Activated B cell treated with CpG ODN at 0.5 μM for 24 hours (primary cell): ENCODE measurements at regions of chr14 and their contacts with region 1.

Region 1: GRCh38 chr14:23320774-23321571 is at the start of gene PABPN1:
- DNase-seq: peak; percentile 89
- ATAC-seq: peak; percentile 87
- H3K4me3 Mint-ChIP-seq: peak within 1 kb of the TSS; percentile 90
- H3K27ac Mint-ChIP-seq: peak within 1 kb of the TSS; percentile 98
- H3K4me1 Mint-ChIP-seq: peaks cover 26% of the 10 kb centered on the region
- H3K27me3 Mint-ChIP-seq: no peaks in the 10 kb centered on the region
- CTCF ChIP-seq: no peak
- total RNA-seq, gene PABPN1: 259 and 264 TPM in 2 replicates

Region 2: GRCh38 chr14:22918804-22919600 is 402.0 kb before region 1 on chr14 and contains the start of gene RBM23:
- CTCF ChIA-PET with region 1: no interaction called
- POLR2A ChIA-PET with region 1: interaction called, 5 read pairs
- intact Hi-C with region 1: loop called (anchors 1 kb)
- DNase-seq: peak; percentile 94
- ATAC-seq: peak; percentile 94
- H3K4me3 Mint-ChIP-seq: peak within 1 kb of the TSS; percentile 99
- H3K27ac Mint-ChIP-seq: peak within 1 kb of the TSS; percentile 100
- H3K4me1 Mint-ChIP-seq: peaks cover 53% of the 10 kb centered on the region
- H3K27me3 Mint-ChIP-seq: no peaks in the 10 kb centered on the region
- CTCF ChIP-seq: no peak
- total RNA-seq, gene RBM23: 130 and 131 TPM in 2 replicates

Region 3: GRCh38 chr14:23294734-23295561 is 26.0 kb before region 1 on chr14:
- CTCF ChIA-PET with region 1: interaction called, 6 read pairs
- POLR2A ChIA-PET with region 1: interaction called, 339 read pairs
- intact Hi-C with region 1: loop called (anchors 1 kb)
- DNase-seq: peak; percentile 30
- ATAC-seq: peak; percentile 88
- H3K4me3 Mint-ChIP-seq: no peak overlapping the region
- H3K27ac Mint-ChIP-seq: no peak overlapping the region
- H3K4me1 Mint-ChIP-seq: peaks cover 15% of the 10 kb centered on the region
- H3K27me3 Mint-ChIP-seq: no peaks in the 10 kb centered on the region
- CTCF ChIP-seq: no peak

Region 4: GRCh38 chr14:23469127-23469905 is 148.3 kb after region 1 on chr14 and contains the start of gene NGDN:
- CTCF ChIA-PET with region 1: no interaction called
- POLR2A ChIA-PET with region 1: interaction called, 6 read pairs
- intact Hi-C with region 1: loop called (anchors 1 kb)
- DNase-seq: peak; percentile 80
- ATAC-seq: peak; percentile 90
- H3K4me3 Mint-ChIP-seq: no peak within 1 kb of the TSS
- H3K27ac Mint-ChIP-seq: no peak within 1 kb of the TSS
- H3K4me1 Mint-ChIP-seq: peaks cover 11% of the 10 kb centered on the region
- H3K27me3 Mint-ChIP-seq: no peaks in the 10 kb centered on the region
- CTCF ChIP-seq: no peak
- total RNA-seq, gene NGDN: 60.5 and 67.4 TPM in 2 replicates

Region 5: DNA sequence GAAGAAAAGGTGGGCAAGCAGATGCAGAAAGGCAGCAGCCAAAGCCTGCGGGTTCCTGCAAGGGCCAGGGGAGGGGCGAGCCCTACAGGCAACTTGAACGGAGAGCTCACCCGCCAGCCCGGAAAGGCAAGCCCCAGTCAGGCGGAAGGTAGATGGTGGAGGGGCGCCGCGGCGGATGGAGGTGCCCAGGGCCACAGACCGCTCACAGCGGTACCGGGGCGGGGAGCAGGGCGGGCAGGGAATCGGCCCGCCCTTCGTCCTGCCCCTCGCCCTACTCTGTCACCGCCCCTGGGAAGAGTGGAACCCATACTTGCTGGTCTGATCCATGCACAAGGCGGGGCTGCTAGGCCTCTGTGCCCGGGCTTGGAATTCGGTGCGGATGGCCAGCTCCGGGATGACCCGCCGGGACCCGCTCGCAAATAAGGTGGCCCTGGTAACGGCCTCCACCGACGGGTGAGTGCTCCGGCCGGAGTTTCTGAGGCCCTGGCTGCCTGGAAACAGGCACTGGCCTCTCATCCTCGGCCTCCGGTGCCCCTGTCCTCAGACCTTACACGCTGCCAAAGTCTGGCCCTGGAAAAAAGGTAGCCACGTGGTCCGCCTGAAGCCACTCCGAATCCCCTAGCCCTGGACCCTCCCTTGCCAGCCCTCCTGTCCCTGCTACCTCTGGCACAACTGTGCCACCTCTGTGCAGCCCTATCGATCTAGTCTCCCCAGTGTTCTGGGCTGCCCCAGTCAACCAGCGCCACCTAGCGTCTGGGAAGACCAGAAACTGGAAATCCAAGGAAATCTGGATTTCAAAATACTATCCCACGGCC is 632.7 kb after region 1 on chr14 and contains the start of gene DHRS4:
- CTCF ChIA-PET with region 1: no interaction called
- POLR2A ChIA-PET with region 1: no interaction called
- intact Hi-C with region 1: loop called (anchors 10 kb)
- DNase-seq: peak; percentile 69
- ATAC-seq: peak; percentile 95
- H3K4me3 Mint-ChIP-seq: peak within 1 kb of the TSS; percentile 97
- H3K27ac Mint-ChIP-seq: peak within 1 kb of the TSS; percentile 88
- H3K4me1 Mint-ChIP-seq: peaks cover 28% of the 10 kb centered on the region
- H3K27me3 Mint-ChIP-seq: no peaks in the 10 kb centered on the region
- CTCF ChIP-seq: peak; percentile 62
- total RNA-seq, gene DHRS4: 15.8 and 16.1 TPM in 2 replicates